ENCODE measurements at regions of chr14 and their contacts with region 1.

Region 1: DNA sequence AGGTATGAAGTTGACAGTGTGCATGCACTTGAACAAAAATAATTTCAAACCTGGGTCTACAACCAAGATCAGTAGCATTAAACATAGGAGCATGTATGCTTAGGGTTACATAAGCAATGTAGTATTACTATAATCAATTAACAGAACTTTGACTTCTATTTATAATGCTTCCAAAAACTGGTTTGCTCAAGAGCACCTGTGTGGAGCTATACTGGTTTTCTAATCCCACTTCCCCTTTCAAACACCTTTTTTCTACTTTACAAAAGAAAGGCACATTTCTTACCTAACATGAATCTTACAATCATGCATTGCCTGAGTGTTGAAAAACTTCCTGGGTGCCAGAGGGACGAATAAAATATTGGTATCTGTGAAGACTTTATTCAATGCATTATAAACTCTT is 72.7 kb downstream of the EFCAB11 start:
- DNase-seq: no peak
- ATAC-seq: no peak
- H3K4me3 ChIP-seq: no peak overlapping the region
- H3K27ac ChIP-seq: no peak overlapping the region
- H3K4me1 ChIP-seq: no peaks in the 10 kb centered on the region
- H3K27me3 ChIP-seq: no peaks in the 10 kb centered on the region
- CTCF ChIP-seq: no peak

Region 2: GRCh38 chr14:89578156-89578555 is 303.7 kb before region 1 on chr14:
- CTCF ChIA-PET with region 1: no interaction called
- POLR2A ChIA-PET with region 1: no interaction called
- intact Hi-C with region 1: loop called (anchors 10 kb)
- DNase-seq: no peak
- ATAC-seq: no peak
- H3K4me3 ChIP-seq: no peak overlapping the region
- H3K27ac ChIP-seq: no peak overlapping the region
- H3K4me1 ChIP-seq: 0 out of 2 replicates have a peak, but pooled peaks cover 5% of the 10 kb centered on the region
- H3K27me3 ChIP-seq: no peaks in the 10 kb centered on the region
- CTCF ChIP-seq: no peak

Region 3: DNA sequence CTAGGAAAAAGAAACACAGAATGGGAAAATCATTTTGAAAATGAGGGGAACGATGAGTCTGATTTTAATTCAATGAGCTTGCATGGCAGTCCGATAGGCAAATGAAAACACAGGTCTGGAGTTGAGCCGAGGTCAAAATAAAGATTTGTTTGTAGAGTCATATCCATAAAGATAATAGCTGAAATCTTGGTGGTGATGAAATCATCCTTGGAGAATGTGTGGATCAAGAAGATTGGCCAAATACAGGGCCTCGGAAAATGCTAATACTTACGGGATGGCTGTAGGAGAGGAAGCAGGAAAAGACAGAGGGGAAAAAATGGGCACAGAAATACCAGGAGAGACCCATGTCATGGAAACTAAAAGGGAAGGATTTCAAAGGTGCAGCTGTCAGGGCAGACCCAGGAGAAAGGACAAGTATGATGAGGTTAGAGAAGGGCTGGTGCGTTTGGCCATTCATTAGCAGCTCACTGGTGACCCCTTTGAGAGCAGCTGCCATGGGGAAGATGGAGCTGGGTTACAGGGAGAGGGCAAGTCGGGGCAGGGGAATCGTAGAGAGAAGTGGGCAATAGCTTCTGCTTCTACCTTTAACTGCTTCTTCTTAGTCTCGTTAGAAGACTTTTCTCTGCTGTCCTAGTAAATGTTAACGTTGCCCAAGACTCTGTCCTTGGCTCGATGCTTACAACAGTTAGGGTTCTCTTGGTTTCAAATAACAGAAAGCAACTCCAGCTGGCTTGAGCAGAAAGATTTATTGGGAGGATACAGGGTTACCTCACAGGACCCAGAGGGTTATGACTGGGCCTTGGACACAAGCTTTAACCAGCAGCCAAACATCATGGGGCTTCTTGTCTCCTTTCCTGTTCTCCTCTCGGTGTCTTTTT is 89.1 kb before region 1 on chr14:
- CTCF ChIA-PET with region 1: no interaction called
- POLR2A ChIA-PET with region 1: no interaction called
- intact Hi-C with region 1: no loop called
- DNase-seq: no peak
- ATAC-seq: no peak
- H3K4me3 ChIP-seq: no peak overlapping the region
- H3K27ac ChIP-seq: no peak overlapping the region
- H3K4me1 ChIP-seq: no peaks in the 10 kb centered on the region
- H3K27me3 ChIP-seq: no peaks in the 10 kb centered on the region
- CTCF ChIP-seq: no peak

Region 4: DNA sequence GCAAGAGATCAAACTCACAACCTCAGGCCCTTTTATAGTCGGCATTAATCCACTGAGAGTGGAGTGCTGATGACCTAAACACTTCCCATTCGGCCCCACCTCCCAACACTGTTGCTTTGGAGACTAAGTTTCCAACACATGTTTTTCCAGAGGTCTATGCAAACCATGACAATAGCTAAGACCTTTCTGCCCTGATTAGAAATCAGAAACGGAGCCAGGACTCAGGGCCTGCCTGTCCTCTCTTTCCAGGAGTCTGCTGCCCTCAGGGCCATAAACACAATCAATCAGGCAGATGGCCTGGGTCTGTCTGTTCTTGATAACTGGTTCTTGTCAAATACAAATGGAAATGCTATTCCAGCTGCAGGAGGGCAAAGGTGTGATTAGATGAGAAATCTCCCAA is 277.3 kb after region 1 on chr14:
- CTCF ChIA-PET with region 1: no interaction called
- POLR2A ChIA-PET with region 1: no interaction called
- intact Hi-C with region 1: no loop called
- DNase-seq: no peak
- ATAC-seq: no peak
- H3K4me3 ChIP-seq: no peak overlapping the region
- H3K27ac ChIP-seq: no peak overlapping the region
- H3K4me1 ChIP-seq: no peaks in the 10 kb centered on the region
- H3K27me3 ChIP-seq: peaks cover 11% of the 10 kb centered on the region; the same call in 1 of the 2 replicates
- CTCF ChIP-seq: no peak